CD4-positive, alpha-beta memory T cell (primary cell): ENCODE measurements at regions of chr9 and their contacts with region 1.

Region 1: GRCh38 chr9:3525836-3526164 is at the start of gene RFX3:
- DNase-seq: peak; percentile 91 to 95 (median 95)
- H3K4me3 ChIP-seq: peak within 1 kb of the TSS; percentile 70 to 93
- H3K4me3 Mint-ChIP-seq: peak within 1 kb of the TSS; percentile 89 to 97 (median 94)
- H3K27ac ChIP-seq: peak within 1 kb of the TSS; percentile 100
- H3K27ac Mint-ChIP-seq: peak within 1 kb of the TSS; percentile 95 to 100 (median 98)
- H3K4me1 ChIP-seq: peaks cover 65% of the 10 kb centered on the region
- H3K4me1 Mint-ChIP-seq: peaks cover 41 to 76% (median 54%) of the 10 kb centered on the region in 4 donors
- H3K27me3 ChIP-seq: no peaks in the 10 kb centered on the region
- H3K27me3 Mint-ChIP-seq: peaks cover 1 to 7% of the 10 kb centered on the region in 2 donors
- total RNA-seq, gene RFX3: 25.9 to 30.8 TPM

Region 2: DNA sequence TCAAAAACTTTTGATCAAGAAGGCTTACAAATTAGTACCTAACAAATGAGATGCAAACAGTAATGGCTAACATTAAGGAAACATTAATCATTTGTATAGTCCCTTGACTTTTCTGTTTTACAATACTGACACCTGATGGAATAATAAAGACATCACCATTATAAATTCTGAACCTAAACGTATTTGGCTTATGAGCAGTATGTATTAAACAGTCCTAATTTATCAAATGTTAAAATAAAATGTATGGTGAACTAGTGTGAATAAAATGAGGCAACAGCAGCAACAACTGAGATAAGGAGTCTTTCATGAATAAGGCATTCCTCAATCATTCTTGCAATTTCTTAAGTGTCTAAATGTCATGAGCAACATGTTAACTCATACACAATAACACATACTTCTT is 687.9 kb before region 1 on chr9:
- CTCF ChIA-PET with region 1: no interaction called
- POLR2A ChIA-PET with region 1: interaction called, 32 read pairs
- intact Hi-C with region 1: no loop called
- DNase-seq: no peak
- H3K4me3 ChIP-seq: no peak overlapping the region
- H3K4me3 Mint-ChIP-seq: peak overlapping the region in 2 of 8 donors; percentile 4 to 36
- H3K27ac ChIP-seq: no peak overlapping the region
- H3K27ac Mint-ChIP-seq: peak overlapping the region in 4 of 7 donors; percentile 17 to 84 (median 51)
- H3K4me1 ChIP-seq: peaks cover 20% of the 10 kb centered on the region
- H3K4me1 Mint-ChIP-seq: peaks cover 16 to 30% (median 20%) of the 10 kb centered on the region in 4 donors
- H3K27me3 ChIP-seq: no peaks in the 10 kb centered on the region
- H3K27me3 Mint-ChIP-seq: no peaks in the 10 kb centered on the region

Region 3: DNA sequence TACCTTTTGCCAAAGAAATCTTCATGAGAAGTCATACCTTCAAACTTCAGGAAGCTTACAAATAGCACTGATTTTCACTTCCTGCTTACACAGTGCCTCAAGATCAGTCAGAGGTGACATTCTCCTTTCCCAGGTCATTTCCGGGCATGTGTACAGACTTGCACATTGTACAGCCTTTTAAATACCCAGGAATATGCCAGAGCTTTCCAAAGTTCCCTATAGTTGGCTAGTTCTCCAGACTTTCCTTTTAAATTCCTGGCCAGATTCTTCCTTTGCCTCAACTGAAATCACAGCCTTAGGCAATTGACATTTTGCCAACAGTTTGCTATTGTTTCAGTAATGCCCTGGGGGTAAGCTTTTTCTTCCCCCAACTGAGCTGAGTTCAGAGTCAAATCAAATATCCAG is 47.2 kb before region 1 on chr9:
- CTCF ChIA-PET with region 1: interaction called, 26 read pairs
- POLR2A ChIA-PET with region 1: interaction called, 249 read pairs
- intact Hi-C with region 1: loop called (anchors 1 kb)
- DNase-seq: peak; percentile 17 to 58 (median 30)
- H3K4me3 ChIP-seq: no peak overlapping the region
- H3K4me3 Mint-ChIP-seq: peak overlapping the region; percentile 76 to 98 (median 90)
- H3K27ac ChIP-seq: peak overlapping the region; percentile 58
- H3K27ac Mint-ChIP-seq: peak overlapping the region; percentile 94 to 100 (median 97)
- H3K4me1 ChIP-seq: peaks cover 37% of the 10 kb centered on the region
- H3K4me1 Mint-ChIP-seq: peaks cover 40 to 77% (median 48%) of the 10 kb centered on the region in 4 donors
- H3K27me3 ChIP-seq: no peaks in the 10 kb centered on the region
- H3K27me3 Mint-ChIP-seq: no peaks in the 10 kb centered on the region

Region 4: DNA sequence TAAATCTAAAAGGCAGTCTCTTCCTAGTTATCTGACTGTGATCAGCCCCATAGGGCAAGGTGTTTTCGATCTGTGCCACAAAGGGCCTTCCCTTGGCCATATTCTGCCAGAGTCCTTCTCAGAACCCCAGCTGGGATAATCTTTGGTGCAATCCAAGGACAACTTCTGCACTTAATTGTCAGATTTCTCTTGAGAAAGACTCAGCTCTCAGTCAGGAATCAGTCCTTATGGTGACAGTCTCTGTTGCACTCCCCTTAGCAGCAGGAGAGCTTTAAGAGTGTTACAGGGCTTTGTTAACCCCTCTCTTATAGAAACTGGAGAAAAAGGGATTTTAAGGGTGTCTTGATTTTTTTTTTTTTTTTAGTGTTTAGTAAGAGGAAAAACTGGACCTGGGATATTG is 15.4 kb after region 1 on chr9:
- CTCF ChIA-PET with region 1: no interaction called
- POLR2A ChIA-PET with region 1: interaction called, 18 read pairs
- intact Hi-C with region 1: no loop called
- DNase-seq: no peak
- H3K4me3 ChIP-seq: no peak overlapping the region
- H3K4me3 Mint-ChIP-seq: no peak overlapping the region
- H3K27ac ChIP-seq: no peak overlapping the region
- H3K27ac Mint-ChIP-seq: no peak overlapping the region
- H3K4me1 ChIP-seq: no peaks in the 10 kb centered on the region
- H3K4me1 Mint-ChIP-seq: peaks cover 3 to 11% (median 7%) of the 10 kb centered on the region in 4 donors
- H3K27me3 ChIP-seq: no peaks in the 10 kb centered on the region
- H3K27me3 Mint-ChIP-seq: no peaks in the 10 kb centered on the region

Region 5: DNA sequence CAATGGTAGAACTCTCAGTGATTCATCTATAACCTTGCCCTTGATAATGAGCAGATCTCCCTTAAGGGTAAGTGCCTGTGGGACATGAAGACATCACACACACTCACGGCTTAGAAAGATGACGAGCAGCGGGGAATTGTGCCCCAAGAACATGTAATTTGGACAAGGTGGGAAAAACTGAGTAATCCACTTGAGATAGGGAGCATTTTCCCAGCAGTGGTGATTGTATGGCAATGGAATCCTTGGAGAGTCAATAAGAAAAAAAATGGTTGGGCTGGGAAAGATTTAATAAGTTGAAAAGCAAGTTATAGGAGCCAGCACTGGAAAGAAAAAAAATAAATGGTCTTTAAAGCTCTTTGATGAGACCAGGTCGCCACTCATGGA is 581.0 kb after region 1 on chr9:
- CTCF ChIA-PET with region 1: no interaction called
- POLR2A ChIA-PET with region 1: no interaction called
- intact Hi-C with region 1: no loop called
- DNase-seq: no peak
- H3K4me3 ChIP-seq: no peak overlapping the region
- H3K4me3 Mint-ChIP-seq: no peak overlapping the region
- H3K27ac ChIP-seq: no peak overlapping the region
- H3K27ac Mint-ChIP-seq: no peak overlapping the region
- H3K4me1 ChIP-seq: no peaks in the 10 kb centered on the region
- H3K4me1 Mint-ChIP-seq: no peaks in the 10 kb centered on the region
- H3K27me3 ChIP-seq: no peaks in the 10 kb centered on the region
- H3K27me3 Mint-ChIP-seq: peaks cover 7 to 12% of the 10 kb centered on the region in 2 donors

Region 6: GRCh38 chr9:4297151-4297785 is 771.5 kb after region 1 on chr9:
- CTCF ChIA-PET with region 1: no interaction called
- POLR2A ChIA-PET with region 1: interaction called, 14 read pairs
- intact Hi-C with region 1: loop called (anchors 2 kb)
- DNase-seq: peak in 4 of 5 donors; percentile 11 to 52 (median 22)
- H3K4me3 ChIP-seq: peak overlapping the region; percentile 34 to 72
- H3K4me3 Mint-ChIP-seq: peak overlapping the region; percentile 93 to 99 (median 95)
- H3K27ac ChIP-seq: no peak overlapping the region
- H3K27ac Mint-ChIP-seq: peak overlapping the region; percentile 48 to 90 (median 61)
- H3K4me1 ChIP-seq: peaks cover 16% of the 10 kb centered on the region
- H3K4me1 Mint-ChIP-seq: peaks cover 4 to 32% (median 19%) of the 10 kb centered on the region in 4 donors
- H3K27me3 ChIP-seq: no peaks in the 10 kb centered on the region
- H3K27me3 Mint-ChIP-seq: peaks cover 15 to 36% of the 10 kb centered on the region in 2 donors

Region 7: DNA sequence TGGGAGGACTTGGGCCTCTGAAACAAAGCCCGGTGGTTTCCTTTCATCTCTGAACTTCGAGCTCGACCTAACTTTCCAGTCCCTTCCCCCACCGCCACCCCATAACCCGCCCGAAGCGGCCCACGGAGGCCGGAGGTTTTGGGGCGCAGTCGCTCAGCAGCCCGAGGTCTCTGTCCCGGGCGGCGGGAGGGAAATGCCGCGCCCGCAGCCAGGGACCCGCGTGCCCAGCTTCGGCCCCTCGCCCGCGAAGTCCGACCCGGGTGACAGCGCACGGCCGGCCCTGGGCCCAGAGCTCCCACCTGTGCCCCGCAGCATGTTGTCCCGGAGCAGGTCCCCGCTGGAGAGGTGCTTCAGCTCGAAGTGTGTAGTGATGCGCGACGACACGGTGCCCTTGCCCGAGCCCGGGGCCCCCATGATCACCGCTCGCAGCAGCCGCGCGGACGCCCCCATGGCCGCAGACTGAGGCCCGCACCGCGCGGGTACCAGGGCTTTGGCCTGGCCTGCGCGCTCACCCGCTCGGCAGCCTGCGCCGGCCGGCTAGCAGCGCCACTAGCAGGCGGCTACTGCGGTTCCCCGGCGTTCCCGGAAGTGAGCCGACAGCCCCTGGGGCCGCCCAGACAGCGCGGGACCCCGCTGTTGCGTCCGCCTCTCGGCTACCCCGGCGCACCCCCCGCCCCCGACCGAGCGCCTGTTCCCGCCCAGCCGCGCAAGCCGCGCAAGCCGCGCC is 1215.0 kb after region 1 on chr9 and contains the start of gene AK3:
- CTCF ChIA-PET with region 1: no interaction called
- POLR2A ChIA-PET with region 1: interaction called, 15 read pairs
- intact Hi-C with region 1: loop called (anchors 5 kb)
- DNase-seq: peak; percentile 82 to 87 (median 84)
- H3K4me3 ChIP-seq: peak within 1 kb of the TSS; percentile 79 to 84
- H3K4me3 Mint-ChIP-seq: peak within 1 kb of the TSS; percentile 91 to 97 (median 94)
- H3K27ac ChIP-seq: peak within 1 kb of the TSS; percentile 78
- H3K27ac Mint-ChIP-seq: peak within 1 kb of the TSS; percentile 65 to 96 (median 94)
- H3K4me1 ChIP-seq: peaks cover 29% of the 10 kb centered on the region
- H3K4me1 Mint-ChIP-seq: peaks cover 20 to 44% (median 32%) of the 10 kb centered on the region in 4 donors
- H3K27me3 ChIP-seq: no peaks in the 10 kb centered on the region
- H3K27me3 Mint-ChIP-seq: no peaks in the 10 kb centered on the region
- total RNA-seq, gene AK3: 23.1 to 25.2 TPM

Region 8: GRCh38 chr9:5437254-5438216 is 1911.7 kb after region 1 on chr9 and contains the start of gene PLGRKT:
- CTCF ChIA-PET with region 1: no interaction called
- POLR2A ChIA-PET with region 1: interaction called, 7 read pairs
- intact Hi-C with region 1: loop called (anchors 5 kb)
- DNase-seq: peak; percentile 89 to 95 (median 91)
- H3K4me3 ChIP-seq: peak within 1 kb of the TSS; percentile 71 to 83
- H3K4me3 Mint-ChIP-seq: peak within 1 kb of the TSS; percentile 91 to 98 (median 94)
- H3K27ac ChIP-seq: peak within 1 kb of the TSS; percentile 92
- H3K27ac Mint-ChIP-seq: peak within 1 kb of the TSS; percentile 99 to 100 (median 99)
- H3K4me1 ChIP-seq: peaks cover 23% of the 10 kb centered on the region
- H3K4me1 Mint-ChIP-seq: peaks cover 25 to 46% (median 36%) of the 10 kb centered on the region in 4 donors
- H3K27me3 ChIP-seq: no peaks in the 10 kb centered on the region
- H3K27me3 Mint-ChIP-seq: no peaks in the 10 kb centered on the region
- total RNA-seq, gene PLGRKT: 20.0 to 21.7 TPM